RWPE1 (cell line): ENCODE measurements at regions of chr22 and their contacts with region 1.

Region 1: DNA sequence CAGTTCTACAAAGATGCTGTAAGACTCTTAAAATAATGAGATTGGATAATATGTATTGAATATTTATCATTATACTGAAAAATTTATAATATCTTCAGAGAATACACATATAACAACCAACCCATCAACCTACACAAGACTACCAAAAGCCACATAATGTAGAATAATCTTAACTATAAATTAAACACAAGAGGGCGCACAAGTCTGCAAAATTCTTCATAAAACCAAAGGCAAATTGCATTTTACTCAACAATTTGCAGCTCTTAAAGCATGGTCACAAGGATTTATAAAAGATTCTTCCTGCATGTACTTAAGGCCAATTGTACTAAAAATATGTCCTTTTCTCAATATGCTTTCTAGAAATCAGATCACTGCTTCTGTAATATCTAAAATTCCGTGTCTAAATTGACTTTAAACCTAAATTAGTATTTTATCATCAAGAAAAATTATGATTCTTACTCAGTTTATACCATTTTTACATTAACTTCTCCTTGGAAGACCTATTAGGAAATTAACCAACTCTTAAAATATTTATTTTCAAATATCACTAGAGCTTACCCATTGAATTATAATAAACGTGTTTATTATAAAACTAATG is 79.0 kb downstream of the TTC28 start:
- DNase-seq: peak; percentile 16
- H3K27ac ChIP-seq: no peak overlapping the region
- CTCF ChIP-seq: peak; percentile 42

Region 2: DNA sequence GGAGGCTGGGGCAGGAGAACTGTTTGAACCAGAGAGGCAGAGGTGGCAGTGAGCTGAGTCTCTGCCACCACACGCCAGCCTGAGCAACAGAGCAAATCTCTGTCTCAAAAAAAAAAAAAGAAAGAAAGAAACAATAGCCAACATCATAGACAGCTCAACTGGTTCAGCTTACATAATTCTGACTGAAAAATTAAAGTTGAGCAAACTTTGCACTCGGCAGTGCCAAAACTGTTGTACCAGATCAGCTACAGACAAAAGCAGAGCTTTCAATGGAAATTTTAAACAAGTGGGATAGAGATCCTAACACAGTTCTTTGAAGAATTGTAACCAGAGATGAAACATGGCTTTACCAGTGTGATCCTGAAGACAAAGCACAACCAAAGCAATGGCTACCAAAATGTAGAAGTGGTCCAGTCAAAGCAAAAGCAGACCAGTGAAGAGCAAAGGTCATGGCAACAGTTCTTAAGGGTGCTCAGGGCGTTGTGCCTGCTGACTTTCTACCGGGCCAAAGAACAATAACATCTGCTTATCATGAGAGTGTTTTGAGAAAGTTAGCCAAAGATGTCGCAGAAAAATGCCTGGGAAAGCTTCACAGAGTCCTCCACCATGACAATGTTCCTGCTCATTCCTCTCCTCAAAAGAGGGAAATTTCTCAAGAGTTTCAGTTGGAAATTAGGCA is 19.7 kb after region 1 on chr22:
- CTCF ChIA-PET with region 1: no interaction called
- POLR2A ChIA-PET with region 1: no interaction called
- DNase-seq: no peak
- H3K27ac ChIP-seq: no peak overlapping the region
- CTCF ChIP-seq: no peak

Region 3: GRCh38 chr22:28829358-28830181 is 228.9 kb after region 1 on chr22:
- CTCF ChIA-PET with region 1: interaction called, 21 read pairs
- POLR2A ChIA-PET with region 1: no interaction called
- DNase-seq: peak; percentile 60
- H3K27ac ChIP-seq: no peak overlapping the region
- CTCF ChIP-seq: peak; percentile 96